Prostate gland (tissue), 2 donors: ENCODE measurements at regions of chr14 and their contacts with region 1.

Region 1: DNA sequence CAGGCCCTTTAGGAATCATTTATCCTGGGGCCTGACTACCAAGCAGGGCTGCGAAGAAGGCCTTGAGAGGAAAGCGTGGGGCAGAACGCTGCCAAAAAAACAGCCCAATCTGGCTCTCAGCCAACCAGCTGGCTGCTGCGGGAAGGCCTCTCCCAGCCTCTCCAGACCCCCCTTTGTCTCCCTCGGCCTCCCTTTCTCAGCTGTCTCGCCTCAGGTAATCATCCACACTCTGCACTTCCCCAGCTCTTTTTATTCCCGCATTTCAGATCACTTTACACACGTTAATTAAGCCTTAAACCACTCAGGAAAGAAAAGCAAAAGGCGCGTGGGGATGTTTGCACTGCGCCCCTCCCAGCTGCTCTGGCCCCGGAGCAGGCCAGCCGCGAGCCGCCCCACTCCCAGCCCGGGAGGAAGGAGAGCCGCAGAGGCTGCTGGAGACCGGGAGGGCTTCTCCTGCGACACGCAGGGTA is 208.2 kb upstream of the FOXN3 start:
- DNase-seq: no peak
- H3K4me3 ChIP-seq: no peak overlapping the region
- H3K27ac ChIP-seq: no peak overlapping the region
- H3K4me1 ChIP-seq: no peaks in the 10 kb centered on the region
- H3K27me3 ChIP-seq: no peaks in the 10 kb centered on the region
- CTCF ChIP-seq: no peak
- POLR2A ChIP-seq: no peak

Region 2: GRCh38 chr14:89425931-89426330 is 199.3 kb before region 1 on chr14:
- intact Hi-C with region 1: loop called (anchors 10 kb)
- DNase-seq: no peak
- H3K4me3 ChIP-seq: no peak overlapping the region
- H3K27ac ChIP-seq: no peak overlapping the region
- H3K4me1 ChIP-seq: peaks cover 6% of the 10 kb centered on the region
- H3K27me3 ChIP-seq: no peaks in the 10 kb centered on the region
- CTCF ChIP-seq: no peak
- POLR2A ChIP-seq: no peak